Activated B cell treated with CpG ODN at 0.5 μM for 24 hours (primary cell): ENCODE measurements at regions of chr2 and their contacts with region 1.

Region 1: GRCh38 chr2:64797881-64798575 is 144.3 kb upstream of the SERTAD2 start:
- DNase-seq: no peak
- ATAC-seq: no peak
- H3K4me3 Mint-ChIP-seq: no peak overlapping the region
- H3K27ac Mint-ChIP-seq: no peak overlapping the region
- H3K4me1 Mint-ChIP-seq: peaks cover 7% of the 10 kb centered on the region
- H3K27me3 Mint-ChIP-seq: no peaks in the 10 kb centered on the region
- CTCF ChIP-seq: no peak

Region 2: DNA sequence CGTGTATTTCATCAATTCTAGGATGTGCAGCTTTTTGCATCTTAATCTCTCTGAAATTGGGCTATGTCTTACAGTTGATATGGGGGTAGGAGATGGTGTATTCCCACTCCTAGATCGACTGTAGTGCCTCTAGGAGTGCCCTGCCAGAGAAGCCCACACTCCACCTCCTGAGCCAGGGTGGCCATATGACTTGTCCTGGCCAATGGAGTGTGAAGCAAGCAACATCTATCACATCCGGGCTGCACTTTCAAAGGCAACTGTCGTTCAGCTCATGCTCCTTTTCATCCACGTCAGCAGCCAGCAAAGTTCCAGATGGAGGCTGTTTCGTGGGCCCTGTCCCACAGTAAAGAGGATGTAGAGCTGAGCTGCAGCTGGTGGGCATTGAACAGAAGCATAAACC is 41.8 kb after region 1 on chr2:
- CTCF ChIA-PET with region 1: no interaction called
- POLR2A ChIA-PET with region 1: interaction called, 6 read pairs
- intact Hi-C with region 1: loop called (anchors 1 kb)
- DNase-seq: no peak
- ATAC-seq: peak; percentile 92
- H3K4me3 Mint-ChIP-seq: peak overlapping the region; percentile 61
- H3K27ac Mint-ChIP-seq: peak overlapping the region; percentile 92
- H3K4me1 Mint-ChIP-seq: peaks cover 51% of the 10 kb centered on the region
- H3K27me3 Mint-ChIP-seq: no peaks in the 10 kb centered on the region
- CTCF ChIP-seq: no peak